ENCODE measurements at regions of chr4 and their contacts with region 1.

Region 1: DNA sequence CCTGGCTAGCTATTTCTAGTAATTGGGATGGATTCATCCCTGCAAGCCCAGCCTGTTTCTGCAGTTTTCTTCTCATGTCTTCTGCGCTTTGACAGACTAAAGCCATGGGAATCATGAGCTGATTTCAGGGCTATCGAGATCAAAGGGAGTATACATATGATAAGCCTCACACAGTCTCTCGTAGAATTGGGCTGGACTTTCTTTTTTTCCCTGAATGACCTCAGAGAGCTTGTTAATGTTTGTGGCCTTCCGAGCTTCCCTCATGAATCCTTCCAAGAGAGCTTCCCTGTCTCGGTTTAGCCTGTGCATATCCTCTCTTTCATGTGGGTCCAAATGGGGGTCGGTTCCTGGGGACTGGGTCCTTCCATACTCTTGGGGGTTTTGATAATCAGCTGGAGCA is 130.3 kb downstream of the ADRA2C start:
- DNase-seq: no peak
- H3K4me3 ChIP-seq: no peak overlapping the region
- H3K27me3 ChIP-seq: no peaks in the 10 kb centered on the region
- CTCF ChIP-seq: no peak

Region 2: GRCh38 chr4:3399277-3400194 is 496.9 kb before region 1 on chr4:
- CTCF ChIA-PET with region 1: no interaction called
- POLR2A ChIA-PET with region 1: no interaction called
- DNase-seq: no peak
- H3K4me3 ChIP-seq: no peak overlapping the region
- H3K27me3 ChIP-seq: no peaks in the 10 kb centered on the region
- CTCF ChIP-seq: no peak

Region 3: DNA sequence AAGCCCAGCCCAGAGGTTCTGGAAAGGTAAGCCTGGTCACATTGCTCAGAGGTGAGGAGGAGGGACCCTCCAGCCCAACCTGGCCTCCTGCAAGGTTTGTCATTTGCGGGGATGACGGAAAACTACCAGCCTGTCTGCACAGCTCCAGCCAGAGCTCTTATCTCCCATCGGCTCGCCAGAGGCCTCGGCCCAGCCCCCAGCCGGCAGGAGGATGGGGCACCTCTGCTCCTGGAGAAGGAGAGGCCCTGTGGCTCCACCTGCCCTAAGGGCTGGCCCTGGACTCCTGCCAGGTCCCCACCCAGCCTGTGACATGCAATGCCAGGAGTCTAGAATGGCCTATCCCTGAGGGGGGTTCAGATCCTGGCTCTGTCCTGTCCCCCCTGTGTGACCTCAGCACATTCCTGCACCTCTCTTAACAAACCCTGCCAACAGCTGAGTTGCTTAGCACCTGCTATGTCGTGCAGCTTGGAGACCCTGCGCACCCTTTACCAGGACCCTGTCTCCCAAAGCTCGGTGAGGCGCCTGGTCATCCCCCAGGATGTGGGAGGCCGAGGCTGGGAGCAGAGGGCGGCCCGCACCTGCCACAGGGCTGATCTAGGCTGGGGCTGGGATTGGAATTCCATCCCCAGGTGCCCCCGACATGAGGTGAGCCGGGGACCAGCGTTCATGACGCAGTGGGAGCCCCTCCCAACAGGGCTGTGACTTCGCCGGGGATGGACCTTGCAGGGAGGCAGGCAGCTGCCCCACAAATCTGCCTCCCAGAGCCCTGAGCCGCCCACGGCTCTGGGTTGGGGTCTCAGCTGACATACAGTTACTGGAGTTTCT is 115.9 kb before region 1 on chr4:
- CTCF ChIA-PET with region 1: no interaction called
- POLR2A ChIA-PET with region 1: no interaction called
- DNase-seq: no peak
- H3K4me3 ChIP-seq: no peak overlapping the region
- H3K27me3 ChIP-seq: peaks cover 1% of the 10 kb centered on the region; the same call in 1 of the 2 replicates
- CTCF ChIP-seq: no peak

Region 4: DNA sequence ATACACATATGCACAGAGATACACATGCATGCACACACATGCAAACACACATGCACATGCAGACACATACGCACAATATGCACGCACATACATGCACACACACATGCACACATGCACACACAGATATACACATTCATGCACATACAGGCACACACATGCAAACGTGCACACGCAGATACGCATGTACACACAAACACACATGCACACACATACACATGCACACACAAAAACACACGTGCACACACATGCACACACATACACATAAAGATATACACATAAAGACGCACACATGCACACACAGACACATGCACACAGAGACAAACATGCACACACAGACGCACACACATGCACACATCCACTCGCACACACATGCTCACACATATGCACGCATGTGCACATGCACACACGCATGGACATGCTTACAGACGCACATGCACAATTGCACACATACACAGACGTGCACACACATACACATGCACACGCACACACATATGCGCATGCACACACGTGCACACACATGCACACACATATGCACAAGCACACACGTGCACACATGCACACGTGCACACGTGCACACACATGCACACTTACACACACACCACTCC is 14.9 kb after region 1 on chr4:
- CTCF ChIA-PET with region 1: no interaction called
- POLR2A ChIA-PET with region 1: no interaction called
- DNase-seq: no peak
- H3K4me3 ChIP-seq: no peak overlapping the region
- H3K27me3 ChIP-seq: no peaks in the 10 kb centered on the region
- CTCF ChIP-seq: no peak

Region 5: DNA sequence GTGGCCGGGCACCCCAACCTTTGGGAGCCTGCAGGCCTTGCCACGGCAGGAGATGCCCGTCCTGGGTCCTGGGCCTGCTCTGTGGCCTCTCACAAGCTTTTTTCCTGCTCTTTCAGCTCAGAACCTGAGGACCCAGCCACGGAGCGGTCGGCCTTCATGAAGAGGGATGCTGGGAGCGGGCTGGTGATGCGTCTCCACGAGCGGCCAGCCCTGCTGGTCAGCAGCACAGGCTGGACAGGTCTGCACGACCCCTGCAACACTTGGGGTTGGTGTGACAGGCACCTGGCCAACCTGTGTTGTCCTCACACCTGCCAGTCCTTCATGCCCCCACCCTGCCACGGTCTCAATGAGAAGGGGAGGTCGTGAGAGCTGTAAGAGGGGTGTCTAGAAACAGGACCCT is 39.7 kb after region 1 on chr4:
- CTCF ChIA-PET with region 1: interaction called, 27 read pairs
- POLR2A ChIA-PET with region 1: no interaction called
- DNase-seq: no peak
- H3K4me3 ChIP-seq: no peak overlapping the region
- H3K27me3 ChIP-seq: no peaks in the 10 kb centered on the region
- CTCF ChIP-seq: no peak